Caco-2 (cell line): ENCODE measurements at regions of chr19 and their contacts with region 1.

Region 1: GRCh38 chr19:13347367-13347766 is 158.9 kb downstream of the CACNA1A start:
- DNase-seq: no peak
- H3K4me3 ChIP-seq: no peak overlapping the region
- H3K4me3 Mint-ChIP-seq: no peak overlapping the region
- H3K27ac Mint-ChIP-seq: no peak overlapping the region
- H3K4me1 ChIP-seq: no peaks in the 10 kb centered on the region
- H3K4me1 Mint-ChIP-seq: no peaks in the 10 kb centered on the region
- H3K27me3 ChIP-seq: no peaks in the 10 kb centered on the region
- H3K27me3 Mint-ChIP-seq: peaks cover 3% of the 10 kb centered on the region
- CTCF ChIP-seq: no peak

Region 2: DNA sequence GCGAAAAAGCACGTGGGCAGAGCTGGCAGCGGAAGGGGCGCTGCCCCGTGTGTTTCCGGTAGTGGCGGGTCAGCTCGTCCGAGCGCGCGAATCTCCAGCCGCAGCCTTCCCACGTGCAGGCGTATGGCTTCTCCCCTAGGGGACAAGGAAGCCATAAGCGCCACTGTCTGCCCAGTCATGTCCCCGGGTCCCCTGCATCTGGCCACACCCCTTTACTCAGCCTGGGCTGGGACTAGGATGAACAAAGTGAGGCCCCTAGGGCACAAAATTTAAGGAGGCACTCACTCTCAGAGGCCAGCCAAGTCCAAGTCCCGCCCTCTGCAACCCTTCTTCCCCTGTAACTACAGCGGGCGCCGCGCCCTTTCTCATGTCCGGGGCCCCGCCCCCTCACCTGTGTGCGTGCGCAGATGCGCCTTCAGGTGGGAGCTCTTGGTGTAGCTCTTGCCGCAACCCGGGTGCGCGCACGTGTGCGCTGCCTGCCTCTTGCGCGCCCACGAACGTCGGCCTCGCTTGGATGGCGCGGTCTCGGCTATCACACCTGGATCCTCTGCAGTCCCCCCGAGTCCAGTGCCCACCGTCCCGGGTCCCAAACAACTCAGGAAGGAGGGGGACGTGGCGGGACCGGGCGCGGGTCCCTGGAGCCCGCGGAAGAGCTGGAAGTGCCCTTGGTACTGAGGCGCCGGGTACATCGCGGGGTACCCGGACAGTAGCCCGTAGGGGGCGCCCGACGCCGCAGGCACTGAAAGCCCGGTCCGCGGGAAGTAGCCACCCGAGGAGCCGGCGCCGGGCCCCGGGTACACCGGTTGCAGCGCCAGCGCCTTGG is 462.2 kb before region 1 on chr19:
- CTCF ChIA-PET with region 1: no interaction called
- POLR2A ChIA-PET with region 1: interaction called, 11 read pairs
- intact Hi-C with region 1: no loop called
- DNase-seq: peak; percentile 87 to 88
- H3K4me3 ChIP-seq: peak overlapping the region; percentile 43
- H3K4me3 Mint-ChIP-seq: peak overlapping the region; percentile 80
- H3K27ac Mint-ChIP-seq: no peak overlapping the region
- H3K4me1 ChIP-seq: no peaks in the 10 kb centered on the region
- H3K4me1 Mint-ChIP-seq: no peaks in the 10 kb centered on the region
- H3K27me3 ChIP-seq: no peaks in the 10 kb centered on the region
- H3K27me3 Mint-ChIP-seq: peaks cover 5% of the 10 kb centered on the region
- CTCF ChIP-seq: peak in 1 of 2 experiments; percentile 49